ENCODE measurements at regions of chr15 and their contacts with region 1.

Region 1: DNA sequence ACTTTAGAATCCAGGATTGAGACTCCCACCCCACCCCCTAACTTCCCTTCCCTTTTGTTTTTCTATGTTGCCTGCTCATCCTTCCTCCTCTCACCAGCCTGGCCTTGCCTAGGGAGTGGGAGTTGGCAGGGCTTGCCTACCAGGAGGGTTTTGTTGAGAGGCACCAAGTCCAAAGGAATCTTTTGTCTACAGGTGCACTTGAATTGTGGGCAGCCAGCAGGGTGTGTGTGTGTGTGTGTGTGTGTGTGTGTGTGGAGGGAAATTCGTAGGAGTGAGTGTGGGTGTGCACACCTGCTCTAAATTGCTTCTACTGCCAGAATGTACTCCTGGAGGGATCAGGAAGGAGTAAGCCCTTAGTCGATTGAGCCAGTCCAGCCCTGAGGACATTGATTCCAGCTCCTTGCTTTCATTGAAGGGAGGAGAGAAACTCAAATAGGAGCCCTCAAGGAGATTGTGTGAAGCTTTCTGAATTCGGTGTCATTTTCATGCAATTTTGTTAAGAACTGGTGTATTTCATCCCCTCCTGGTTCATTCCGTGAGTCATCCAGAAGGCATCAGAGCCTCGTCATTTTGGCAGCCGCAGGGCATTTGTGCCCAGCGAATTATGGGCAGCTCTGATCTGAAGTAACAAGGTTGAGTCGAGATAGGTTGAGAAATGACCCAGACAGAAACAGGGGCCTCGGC is 112.1 kb downstream of the SLCO3A1 start:
- DNase-seq: peak; percentile 27
- ATAC-seq: peak; percentile 80
- H3K4me3 ChIP-seq: peak overlapping the region in 1 of 2 experiments; percentile 37; a peak in 2 of 4 replicates
- H3K27ac ChIP-seq: no peak overlapping the region
- H3K4me1 ChIP-seq: peaks cover 12 to 21% of the 10 kb centered on the region in 2 experiments
- H3K27me3 ChIP-seq: no peaks in the 10 kb centered on the region
- CTCF ChIP-seq: no peak
- POLR2A ChIP-seq: no peak
- RAD21 ChIP-seq: no peak

Region 2: DNA sequence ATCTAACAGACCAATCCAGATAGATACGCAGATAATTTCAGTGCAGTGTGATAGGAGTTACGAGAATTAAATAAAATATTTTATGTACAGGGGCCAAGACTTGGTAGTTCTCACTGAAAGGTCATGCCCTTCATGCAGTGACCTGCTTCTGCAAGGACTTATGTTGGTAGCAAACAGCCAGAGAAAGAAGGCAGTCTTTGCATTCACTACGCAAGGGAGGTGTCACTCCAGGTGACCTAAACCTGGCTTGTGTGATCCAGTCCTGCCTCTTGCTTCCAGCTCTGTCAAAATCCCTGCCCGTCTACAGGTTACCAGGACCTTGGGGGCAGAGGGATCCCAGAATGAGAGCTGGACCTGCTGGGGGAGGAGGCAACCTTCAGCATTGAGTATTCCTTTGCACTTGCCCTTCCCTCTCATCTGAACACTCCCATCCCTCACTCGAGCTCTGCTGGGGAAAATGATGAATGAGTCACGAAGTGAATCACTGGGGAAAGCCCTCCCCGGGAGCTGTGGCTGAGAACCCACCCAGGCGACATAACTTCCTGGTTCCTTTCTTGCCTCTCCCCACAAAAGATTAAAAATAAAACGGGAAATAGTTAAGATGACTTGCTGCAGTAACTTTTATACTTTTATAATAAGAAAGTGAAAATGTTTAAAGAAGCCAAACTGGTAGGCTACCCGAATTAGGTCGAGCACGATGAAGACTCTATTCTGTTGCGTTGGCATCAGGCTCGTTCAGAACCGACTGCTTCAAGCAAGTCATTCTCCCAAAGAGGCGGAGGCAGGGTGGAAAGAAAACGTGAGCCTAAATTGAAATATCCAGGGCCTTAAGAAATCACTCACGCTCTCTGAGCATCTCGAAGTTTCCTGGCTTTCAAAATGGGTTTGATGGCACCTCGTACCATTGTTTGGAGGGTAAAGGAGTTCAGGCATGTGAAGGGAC is 103.9 kb after region 1 on chr15:
- CTCF ChIA-PET with region 1: no interaction called
- POLR2A ChIA-PET with region 1: no interaction called
- RAD21 ChIA-PET with region 1: no interaction called
- intact Hi-C with region 1: loop called (anchors 2 kb)
- DNase-seq: peak; percentile 39
- ATAC-seq: peak; percentile 95
- H3K4me3 ChIP-seq: peak overlapping the region; percentile 19 to 32; a peak in 3 of 4 replicates
- H3K27ac ChIP-seq: no peak overlapping the region
- H3K4me1 ChIP-seq: peaks cover 2 to 13% of the 10 kb centered on the region in 2 experiments; a peak in 3 of 4 replicates
- H3K27me3 ChIP-seq: no peaks in the 10 kb centered on the region; the same call in 1 of the 2 replicates
- CTCF ChIP-seq: no peak
- POLR2A ChIP-seq: no peak
- RAD21 ChIP-seq: no peak

Region 3: GRCh38 chr15:92244703-92245102 is 279.1 kb after region 1 on chr15:
- CTCF ChIA-PET with region 1: no interaction called
- POLR2A ChIA-PET with region 1: no interaction called
- RAD21 ChIA-PET with region 1: no interaction called
- intact Hi-C with region 1: no loop called
- DNase-seq: no peak
- ATAC-seq: peak; percentile 49; the same call in 1 of the 2 replicates
- H3K4me3 ChIP-seq: no peak overlapping the region
- H3K27ac ChIP-seq: no peak overlapping the region
- H3K4me1 ChIP-seq: no peaks in the 10 kb centered on the region
- H3K27me3 ChIP-seq: peaks cover 42% of the 10 kb centered on the region
- CTCF ChIP-seq: peak in 1 of 3 experiments; percentile 26; a peak in 2 of 6 replicates
- POLR2A ChIP-seq: no peak
- RAD21 ChIP-seq: no peak

Measured in HCT116 (cell line).